Breast epithelium (tissue), 4 donors: ENCODE measurements at regions of chr4 and their contacts with region 1.

Region 1: DNA sequence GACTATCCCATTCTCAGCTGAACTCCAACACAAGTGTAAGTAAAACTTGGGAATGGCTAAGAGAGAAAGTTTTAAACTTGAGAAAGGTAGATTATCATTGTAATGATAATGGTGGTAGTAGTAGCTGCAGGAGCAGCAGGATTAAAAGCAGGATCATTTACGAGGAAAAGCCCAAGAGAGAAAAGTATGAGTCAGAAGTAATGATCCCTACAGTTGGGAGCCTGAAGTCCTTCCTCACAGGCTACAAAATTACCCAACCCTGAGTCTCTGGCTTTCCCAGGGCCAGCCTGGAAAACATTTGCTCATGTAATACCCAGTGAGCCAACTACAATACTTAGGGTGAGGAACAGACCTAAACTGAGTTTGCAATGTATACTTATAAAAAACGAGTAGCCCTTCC is 4.4 kb upstream of the PRDM8 start:
- DNase-seq: no peak
- H3K4me3 ChIP-seq: no peak overlapping the region
- H3K27ac ChIP-seq: no peak overlapping the region
- H3K4me1 ChIP-seq: no peaks in the 10 kb centered on the region
- H3K27me3 ChIP-seq: peaks cover 0 to 84% of the 10 kb centered on the region in 2 donors
- CTCF ChIP-seq: no peak
- POLR2A ChIP-seq: no peak

Region 2: DNA sequence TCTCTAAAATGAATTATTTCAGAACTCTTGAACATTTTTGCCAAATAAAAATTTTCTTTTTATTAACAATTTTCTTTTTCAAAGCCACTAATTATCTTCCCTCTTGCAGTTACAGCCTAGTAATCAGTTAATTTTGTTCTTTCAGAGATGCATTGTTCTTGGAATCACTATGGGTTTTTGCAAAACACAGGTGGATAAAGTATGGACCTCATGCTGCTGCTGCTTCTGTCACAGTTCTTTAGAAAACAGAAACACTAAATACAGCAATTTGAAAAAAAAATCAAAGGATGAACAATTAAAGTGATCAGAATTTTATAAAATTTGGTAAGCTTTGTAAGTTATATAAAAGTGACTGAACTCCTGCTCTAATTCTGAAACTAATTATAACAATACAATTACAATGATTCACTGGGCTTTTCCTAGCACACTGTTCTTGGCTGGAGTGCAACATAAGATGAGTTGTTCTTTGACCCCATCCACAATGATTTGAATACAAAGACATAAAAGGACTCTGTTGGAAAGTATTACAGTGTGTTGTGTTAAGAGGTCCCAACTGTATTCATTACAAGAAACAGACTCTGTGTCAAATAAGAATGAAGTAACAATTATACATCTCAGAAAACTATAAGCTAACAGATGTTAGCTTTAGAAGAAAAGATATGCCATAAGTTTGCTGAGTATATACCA is 725.5 kb before region 1 on chr4:
- intact Hi-C with region 1: no loop called
- DNase-seq: no peak
- H3K4me3 ChIP-seq: no peak overlapping the region
- H3K27ac ChIP-seq: no peak overlapping the region
- H3K4me1 ChIP-seq: no peaks in the 10 kb centered on the region
- H3K27me3 ChIP-seq: no peaks in the 10 kb centered on the region
- CTCF ChIP-seq: no peak
- POLR2A ChIP-seq: no peak

Region 3: GRCh38 chr4:80206521-80207171 is 13.7 kb after region 1 on chr4:
- intact Hi-C with region 1: loop called (anchors 1 kb)
- DNase-seq: no peak
- H3K4me3 ChIP-seq: peak overlapping the region in 1 of 3 donors; percentile 0
- H3K27ac ChIP-seq: peak overlapping the region in 1 of 2 donors; percentile 22
- H3K4me1 ChIP-seq: peaks cover 2 to 4% of the 10 kb centered on the region in 2 donors
- H3K27me3 ChIP-seq: peaks cover 0 to 31% of the 10 kb centered on the region in 2 donors
- CTCF ChIP-seq: no peak
- POLR2A ChIP-seq: no peak

Region 4: DNA sequence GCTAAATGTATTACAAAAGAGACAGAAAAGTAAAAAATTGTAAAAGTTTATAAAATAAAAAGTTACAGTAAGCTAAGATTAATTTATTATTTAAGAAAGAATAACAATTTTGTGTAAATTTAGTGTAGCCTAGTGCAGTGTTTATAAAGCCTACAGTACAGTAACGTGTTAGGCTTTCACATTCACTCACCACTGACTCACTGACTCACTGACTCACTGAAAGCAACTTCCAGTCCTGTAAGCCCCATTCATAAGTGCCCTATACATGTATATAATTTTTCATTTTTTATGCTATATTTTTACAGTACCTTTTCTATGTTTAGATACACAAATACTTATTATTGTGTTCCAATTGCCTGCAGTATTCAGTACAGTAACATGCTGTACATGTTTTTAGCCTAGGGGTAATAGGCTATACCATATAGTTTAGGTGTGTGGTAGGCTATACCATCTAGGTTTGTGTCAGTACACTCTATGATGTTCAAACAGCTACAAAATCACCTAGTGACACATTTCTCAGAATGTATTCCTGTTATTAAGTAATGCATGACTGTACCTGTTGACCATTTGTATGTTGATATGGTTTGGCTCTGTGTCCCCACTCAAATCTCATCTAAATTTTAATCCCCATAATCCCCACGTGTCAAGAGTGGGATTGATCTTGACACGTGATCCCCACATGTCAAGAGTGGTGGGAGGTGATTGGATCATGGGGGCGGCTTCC is 200.5 kb after region 1 on chr4:
- intact Hi-C with region 1: loop called (anchors 5 kb)
- DNase-seq: no peak
- H3K4me3 ChIP-seq: no peak overlapping the region
- H3K27ac ChIP-seq: no peak overlapping the region
- H3K4me1 ChIP-seq: no peaks in the 10 kb centered on the region
- H3K27me3 ChIP-seq: no peaks in the 10 kb centered on the region
- CTCF ChIP-seq: no peak
- POLR2A ChIP-seq: no peak